Activated T-helper 1 cell treated with anti-CD3 and anti-CD28 coated beads, Interleukin-12 subunit alpha, Interleukin-12 subunit beta, Interleukin-2, Interleukin-4 antibody, amounts not matched to agents 30 ng/mL and 10 ng/mL and 1 ng/mL, durations not matched to agents 14 hours and 24 hours and 36 hours (primary cell): ENCODE measurements at regions of chr9 and their contacts with region 1.

Region 1: DNA sequence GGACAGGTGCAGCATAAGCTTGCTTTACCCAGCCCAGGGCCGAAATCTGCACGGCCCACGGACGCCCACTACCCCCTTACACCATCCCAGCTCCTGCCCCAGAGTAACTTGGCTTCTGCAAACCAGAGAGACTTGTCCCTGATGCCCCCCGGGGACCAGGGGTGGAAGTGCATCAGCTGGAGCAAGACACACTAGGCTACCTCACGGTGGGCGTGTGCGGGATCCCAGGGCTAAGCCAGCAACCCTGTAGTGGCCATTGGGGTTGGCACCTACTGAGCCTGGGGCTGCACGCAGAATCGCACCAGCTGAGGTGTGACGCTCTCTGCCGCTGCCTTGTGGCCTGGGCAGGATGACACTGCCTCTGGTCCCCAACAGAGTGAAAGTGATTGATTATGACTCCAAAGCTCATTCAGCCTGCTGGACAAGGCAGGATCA is 6.1 kb upstream of the ZNF79 start:
- DNase-seq: peak; percentile 19
- H3K4me3 Mint-ChIP-seq: no peak overlapping the region
- H3K27ac Mint-ChIP-seq: no peak overlapping the region
- H3K4me1 Mint-ChIP-seq: peaks cover 5% of the 10 kb centered on the region
- H3K27me3 Mint-ChIP-seq: no peaks in the 10 kb centered on the region

Region 2: DNA sequence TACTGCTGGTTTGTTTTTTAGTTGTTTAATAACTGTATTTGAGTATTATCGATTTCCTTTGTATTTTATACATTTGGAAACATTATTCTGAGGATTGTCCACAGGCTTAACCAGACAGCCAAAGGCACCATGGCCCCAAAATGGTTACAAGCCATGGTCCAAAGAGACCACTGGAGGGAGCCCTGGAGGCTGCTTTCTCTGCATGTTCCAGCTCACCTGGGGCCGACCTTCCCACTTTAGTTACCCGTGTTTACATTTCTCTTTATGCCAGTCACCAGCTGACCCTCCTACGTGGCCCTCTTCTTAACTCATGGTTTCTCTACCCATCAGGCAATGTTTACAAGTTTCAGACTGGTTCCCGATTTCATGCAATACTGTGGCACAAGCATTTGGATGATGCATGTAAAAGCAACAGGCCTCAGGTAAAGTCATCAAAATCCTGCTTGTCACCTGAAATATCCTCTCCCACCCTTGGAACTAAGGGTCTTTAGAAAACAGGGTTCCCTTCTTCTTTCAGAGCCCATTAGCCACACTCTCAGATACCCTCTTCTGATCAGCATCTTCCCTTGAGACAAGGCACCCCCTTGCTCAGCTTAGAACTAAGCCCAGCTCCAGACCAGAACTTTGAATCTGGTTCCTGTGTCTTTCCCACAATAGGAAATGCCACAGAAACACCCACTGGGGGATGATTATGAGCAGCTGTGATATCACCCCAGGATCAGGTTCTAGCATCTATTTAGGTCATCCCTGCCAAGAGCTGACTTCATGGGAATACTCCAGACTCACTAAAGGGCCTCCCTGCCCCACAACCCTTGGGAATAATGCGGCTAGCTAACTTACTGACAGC is 203.4 kb before region 1 on chr9:
- intact Hi-C with region 1: loop called (anchors 2 kb)
- DNase-seq: peak; percentile 44
- H3K4me3 Mint-ChIP-seq: no peak overlapping the region
- H3K27ac Mint-ChIP-seq: no peak overlapping the region
- H3K4me1 Mint-ChIP-seq: no peaks in the 10 kb centered on the region
- H3K27me3 Mint-ChIP-seq: peaks cover 7% of the 10 kb centered on the region